ENCODE measurements at regions of chr1 and their contacts with region 1.

Region 1: DNA sequence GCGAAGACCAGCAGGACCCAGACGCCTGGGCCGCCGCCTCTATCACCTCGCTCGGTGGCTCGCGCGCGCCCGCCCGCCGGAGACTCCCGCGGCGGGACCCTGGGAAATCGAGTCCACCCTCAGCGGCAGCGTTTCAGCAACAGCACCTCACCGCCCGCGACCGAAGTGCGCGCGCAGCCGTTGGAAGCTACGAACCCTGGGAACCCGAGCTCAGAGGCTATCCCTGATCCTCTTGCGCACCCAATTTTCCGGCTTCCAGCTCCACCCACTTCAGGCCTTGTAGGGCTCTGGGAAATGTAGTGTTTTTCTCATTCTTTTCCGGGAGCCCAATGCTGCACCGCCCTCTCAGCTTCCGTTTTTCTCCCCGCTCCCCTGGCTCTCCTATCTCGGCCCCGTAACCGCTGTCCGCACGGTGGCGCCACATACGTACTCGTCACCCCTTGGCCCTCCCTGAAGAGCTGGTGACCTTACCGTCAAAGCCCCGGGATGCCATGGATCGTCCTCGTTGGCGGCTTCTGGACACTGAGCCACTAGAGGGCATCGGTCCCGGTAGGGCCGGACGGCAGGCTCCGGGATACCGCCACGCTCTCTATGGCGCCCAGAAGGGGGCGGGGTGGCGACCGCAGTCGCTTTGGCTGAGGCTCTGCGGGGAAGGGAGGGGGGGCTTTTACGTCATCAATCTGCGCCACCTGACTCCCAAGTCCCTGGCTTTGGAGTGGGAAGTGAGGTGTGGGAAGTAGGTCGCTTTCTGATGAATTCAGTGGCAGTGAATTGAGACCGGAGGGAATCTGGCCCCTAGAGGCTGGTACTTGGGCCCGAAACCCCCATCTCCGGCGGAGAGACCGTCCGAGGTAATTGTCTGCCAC is at the starts of genes ODR4 and TPR:
- DNase-seq: peak; percentile 99
- H3K4me3 Mint-ChIP-seq: peak within 1 kb of the TSS; percentile 100
- H3K27ac Mint-ChIP-seq: peak within 1 kb of the TSS; percentile 99
- H3K4me1 Mint-ChIP-seq: peaks cover 37% of the 10 kb centered on the region
- H3K27me3 Mint-ChIP-seq: no peaks in the 10 kb centered on the region
- total RNA-seq, gene ODR4: 15.6 and 20.0 TPM in 2 replicates
- total RNA-seq, gene TPR: 174 and 185 TPM in 2 replicates

Region 2: DNA sequence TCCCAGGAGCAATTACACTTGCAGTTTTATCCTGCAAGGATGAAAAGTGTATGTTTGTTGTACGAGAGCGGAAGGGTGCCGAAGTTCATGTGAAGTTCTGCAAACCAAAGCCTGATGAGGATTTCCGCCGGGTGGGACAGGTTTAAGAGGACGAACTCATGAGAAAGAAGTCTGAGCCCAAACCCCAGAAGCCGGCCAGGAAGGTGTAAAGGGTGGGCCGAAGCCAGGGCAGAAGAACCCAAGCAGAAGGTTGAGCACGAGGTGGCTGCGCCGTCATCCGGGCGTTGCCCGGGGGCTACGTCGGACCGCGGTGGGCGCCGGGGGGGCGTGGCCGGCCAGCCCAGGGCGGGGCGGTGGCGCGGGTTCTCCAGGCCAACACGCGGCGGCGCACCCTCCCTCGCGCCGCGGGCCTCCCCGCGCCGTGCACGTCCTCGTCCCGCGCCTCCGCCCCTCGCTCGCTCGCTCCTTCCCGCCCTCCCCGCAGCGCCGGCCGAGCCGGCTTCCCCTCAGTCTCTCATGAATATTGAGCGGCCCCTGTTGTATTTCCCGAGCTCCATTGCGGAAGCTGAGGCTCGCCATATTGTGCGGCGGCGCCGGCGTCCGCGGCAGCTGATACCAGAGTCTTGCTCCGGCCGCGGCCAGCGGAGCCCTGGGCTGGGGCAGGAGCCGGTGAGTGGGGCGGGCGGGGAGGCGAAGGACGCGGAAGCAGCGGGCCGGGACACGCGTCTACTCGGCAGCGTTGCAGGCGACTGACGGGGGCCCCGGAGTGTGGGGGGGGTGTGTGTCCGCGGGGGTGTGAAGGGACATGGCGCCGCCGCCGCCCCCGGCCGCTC is 1330.1 kb before region 1 on chr1 and contains the start of gene RNF2:
- intact Hi-C with region 1: loop called (anchors 2 kb)
- DNase-seq: peak; percentile 91
- H3K4me3 Mint-ChIP-seq: peak within 1 kb of the TSS; percentile 93
- H3K27ac Mint-ChIP-seq: peak within 1 kb of the TSS; percentile 91
- H3K4me1 Mint-ChIP-seq: peaks cover 26% of the 10 kb centered on the region
- H3K27me3 Mint-ChIP-seq: peaks cover 18% of the 10 kb centered on the region
- total RNA-seq, gene RNF2: 17.8 and 21.1 TPM in 2 replicates

Region 3: DNA sequence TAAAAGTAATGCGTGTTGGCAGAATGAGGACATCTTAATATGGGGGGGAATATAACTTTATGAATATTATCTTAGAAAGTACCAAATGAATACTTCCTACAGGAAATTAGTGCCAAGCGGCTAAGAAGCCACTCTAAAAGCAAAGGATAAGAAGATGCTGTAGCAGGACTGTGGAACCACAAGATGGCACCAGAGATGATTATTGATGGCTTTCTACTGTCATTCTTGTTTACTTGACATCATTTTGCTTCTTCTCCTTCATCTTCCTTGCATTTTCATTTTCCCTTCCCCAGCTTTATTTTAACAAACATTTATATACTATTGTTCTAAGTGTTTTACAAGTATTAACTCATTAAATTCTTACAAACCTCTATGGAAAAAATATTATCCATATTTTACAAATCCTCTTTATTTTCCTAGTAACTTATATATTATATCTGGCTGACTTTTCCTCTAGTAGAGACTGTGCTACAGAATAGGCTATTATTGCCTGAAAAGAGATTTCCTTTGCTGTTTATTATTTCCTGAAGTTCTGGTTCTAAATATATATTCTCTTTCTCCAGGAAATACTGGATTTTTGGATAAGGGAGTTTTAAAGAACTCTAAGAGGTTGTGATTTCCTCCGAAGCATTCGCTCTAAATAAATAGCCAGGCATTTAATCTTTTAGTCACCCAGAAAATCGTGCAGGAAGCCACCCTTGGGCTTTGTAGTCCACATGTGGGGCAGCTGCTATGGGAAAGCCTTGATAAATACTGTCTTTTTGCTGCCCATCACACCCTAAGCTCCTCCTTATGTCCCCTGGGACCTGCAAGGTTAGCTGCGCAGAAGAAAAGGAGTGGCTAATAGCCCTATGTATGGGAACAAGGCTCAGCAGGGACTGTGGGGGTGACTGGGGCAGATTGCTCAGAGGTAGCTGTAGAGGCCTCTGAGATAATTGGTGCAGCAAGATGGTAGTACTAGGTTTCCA is 70.1 kb before region 1 on chr1:
- intact Hi-C with region 1: loop called (anchors 10 kb)
- DNase-seq: peak; percentile 79
- H3K4me3 Mint-ChIP-seq: peak overlapping the region; percentile 11
- H3K27ac Mint-ChIP-seq: peak overlapping the region; percentile 91
- H3K4me1 Mint-ChIP-seq: peaks cover 48% of the 10 kb centered on the region
- H3K27me3 Mint-ChIP-seq: no peaks in the 10 kb centered on the region

Region 4: GRCh38 chr1:186323865-186324264 is 51.5 kb before region 1 on chr1:
- intact Hi-C with region 1: no loop called
- DNase-seq: no peak
- H3K4me3 Mint-ChIP-seq: peak overlapping the region; percentile 60
- H3K27ac Mint-ChIP-seq: no peak overlapping the region
- H3K4me1 Mint-ChIP-seq: peaks cover 29% of the 10 kb centered on the region
- H3K27me3 Mint-ChIP-seq: no peaks in the 10 kb centered on the region

Region 5: DNA sequence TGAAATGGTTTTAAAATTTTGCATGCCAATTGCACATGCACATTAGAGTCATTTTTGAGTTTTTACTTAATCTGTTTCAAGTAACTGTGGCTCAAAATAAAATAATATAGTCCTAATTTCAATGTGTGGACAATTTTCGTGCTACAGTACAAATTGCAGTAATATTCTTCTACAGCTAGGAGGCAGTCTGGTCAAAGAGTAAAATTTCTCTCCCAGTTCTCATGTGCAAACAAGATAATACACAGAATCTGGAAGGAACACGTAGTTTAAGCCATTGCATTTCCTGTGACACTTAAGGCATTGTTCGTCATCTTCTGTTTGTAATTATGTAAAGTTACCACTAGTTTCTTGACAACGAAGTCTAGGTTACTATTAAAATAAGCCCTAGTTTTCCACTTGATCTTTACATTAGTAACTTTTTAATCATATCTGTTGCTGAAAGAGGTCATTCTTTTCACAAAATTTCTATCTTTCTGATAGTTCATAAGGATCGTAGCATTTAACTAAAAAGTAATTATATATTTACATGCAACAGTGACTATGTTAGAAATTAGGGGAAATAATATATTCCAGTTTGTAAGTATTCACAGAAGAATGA is 29.2 kb after region 1 on chr1:
- intact Hi-C with region 1: loop called (anchors 2 kb)
- DNase-seq: peak; percentile 74
- H3K4me3 Mint-ChIP-seq: no peak overlapping the region
- H3K27ac Mint-ChIP-seq: no peak overlapping the region
- H3K4me1 Mint-ChIP-seq: peaks cover 9% of the 10 kb centered on the region
- H3K27me3 Mint-ChIP-seq: no peaks in the 10 kb centered on the region

Region 6: GRCh38 chr1:186985889-186986491 is 610.7 kb after region 1 on chr1:
- intact Hi-C with region 1: loop called (anchors 1 kb)
- DNase-seq: peak; percentile 70
- H3K4me3 Mint-ChIP-seq: no peak overlapping the region
- H3K27ac Mint-ChIP-seq: no peak overlapping the region
- H3K4me1 Mint-ChIP-seq: no peaks in the 10 kb centered on the region
- H3K27me3 Mint-ChIP-seq: peaks cover 3% of the 10 kb centered on the region